ENCODE measurements at regions of chr19 and their contacts with region 1.

Region 1: GRCh38 chr19:2578901-2579677 is 103.2 kb downstream of the GADD45B start:
- DNase-seq: peak; percentile 93 to 98 (median 97)
- ATAC-seq: peak; percentile 65 to 77 (median 72)
- H3K4me3 ChIP-seq: peak overlapping the region; percentile 42 to 62 (median 62)
- H3K27ac ChIP-seq: peak overlapping the region; percentile 82 to 93 (median 91)
- H3K4me1 ChIP-seq: peaks cover 0 to 32% (median 13%) of the 10 kb centered on the region in 4 donors
- H3K27me3 ChIP-seq: no peaks in the 10 kb centered on the region
- CTCF ChIP-seq: peak; percentile 85 to 92 (median 88)
- POLR2A ChIP-seq: peak; percentile 83

Region 2: GRCh38 chr19:2475702-2476450 is 103.2 kb before region 1 on chr19 and contains the start of gene GADD45B:
- intact Hi-C with region 1: loop called in 1 of 2 experiments (anchors 10 kb)
- DNase-seq: peak; percentile 98 to 99 (median 99)
- ATAC-seq: peak; percentile 61 to 82 (median 70)
- H3K4me3 ChIP-seq: peak within 1 kb of the TSS; percentile 71 to 96 (median 77)
- H3K27ac ChIP-seq: peak within 1 kb of the TSS; percentile 81 to 97 (median 93)
- H3K4me1 ChIP-seq: peaks cover 0 to 13% (median 0%) of the 10 kb centered on the region in 4 donors
- H3K27me3 ChIP-seq: no peaks in the 10 kb centered on the region
- CTCF ChIP-seq: no peak
- POLR2A ChIP-seq: peak; percentile 100
- total RNA-seq, gene GADD45B: 39.0 to 176 (median 127) TPM

Region 3: DNA sequence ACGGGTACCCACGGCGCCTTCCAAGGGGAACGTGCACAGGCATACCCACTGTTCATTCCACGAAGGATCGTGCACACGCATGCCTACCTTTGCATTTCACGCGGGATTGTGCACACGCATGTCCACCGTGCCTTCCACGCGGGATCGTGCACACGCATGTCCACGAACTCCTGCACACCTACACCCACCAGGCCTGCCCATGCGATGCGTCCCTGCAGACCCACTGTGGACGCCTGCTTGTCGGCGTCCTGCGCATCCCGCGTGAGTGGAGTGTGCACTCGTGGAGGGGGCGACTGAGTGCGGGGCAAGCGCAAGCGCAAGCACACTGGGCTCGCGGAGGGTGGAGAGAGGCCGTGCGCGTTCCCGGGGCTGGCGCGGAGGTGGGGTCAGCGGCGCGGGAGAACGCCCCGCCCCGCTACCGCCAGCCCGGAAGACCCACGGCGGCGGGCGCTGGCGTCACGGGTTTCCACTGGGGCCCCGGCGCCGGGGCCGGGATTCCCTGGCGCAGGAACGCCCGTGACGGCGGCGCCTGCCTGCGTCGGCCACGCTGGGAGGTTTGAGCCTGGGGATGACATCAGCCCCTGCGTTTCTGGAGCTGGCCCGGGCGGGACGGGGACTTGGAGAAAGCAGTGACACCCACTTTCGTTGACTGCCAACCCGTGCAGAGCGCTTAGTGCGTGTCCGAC is 84.5 kb before region 1 on chr19:
- intact Hi-C with region 1: loop called in 1 of 2 experiments (anchors 10 kb)
- DNase-seq: peak; percentile 68 to 82 (median 81)
- ATAC-seq: peak; percentile 49 to 69 (median 66)
- H3K4me3 ChIP-seq: peak overlapping the region; percentile 50 to 61 (median 55)
- H3K27ac ChIP-seq: peak overlapping the region; percentile 56 to 66 (median 58)
- H3K4me1 ChIP-seq: peaks cover 0 to 21% (median 9%) of the 10 kb centered on the region in 4 donors
- H3K27me3 ChIP-seq: no peaks in the 10 kb centered on the region
- CTCF ChIP-seq: no peak
- POLR2A ChIP-seq: peak; percentile 49

Region 4: GRCh38 chr19:2627319-2627829 is 48.3 kb after region 1 on chr19:
- intact Hi-C with region 1: loop called in 1 of 2 experiments (anchors 5 kb)
- DNase-seq: peak; percentile 89 to 93 (median 90)
- ATAC-seq: peak; percentile 60 to 72 (median 67)
- H3K4me3 ChIP-seq: no peak overlapping the region
- H3K27ac ChIP-seq: peak overlapping the region; percentile 86 to 94 (median 88)
- H3K4me1 ChIP-seq: peaks cover 0 to 57% (median 28%) of the 10 kb centered on the region in 4 donors
- H3K27me3 ChIP-seq: no peaks in the 10 kb centered on the region
- CTCF ChIP-seq: no peak
- POLR2A ChIP-seq: peak; percentile 91

Measured in right lobe of liver (tissue), 6 donors.